Transverse colon (tissue), 4 donors: ENCODE measurements at regions of chrX and their contacts with region 1.

Region 1: GRCh38 chrX:51860679-51861078 is 32.7 kb upstream of the MAGED1 start:
- DNase-seq: peak; percentile 14
- H3K4me3 ChIP-seq: no peak overlapping the region
- H3K27ac ChIP-seq: no peak overlapping the region
- H3K4me1 ChIP-seq: no peaks in the 10 kb centered on the region
- H3K27me3 ChIP-seq: no peaks in the 10 kb centered on the region
- CTCF ChIP-seq: peak; percentile 18 to 39 (median 34)
- EP300 ChIP-seq: no peak
- POLR2A ChIP-seq: no peak

Region 2: GRCh38 chrX:50920132-50920531 is 940.5 kb before region 1 on chrX:
- in situ Hi-C with region 1: no loop called
- intact Hi-C with region 1: no loop called
- DNase-seq: no peak
- H3K4me3 ChIP-seq: no peak overlapping the region
- H3K27ac ChIP-seq: no peak overlapping the region
- H3K4me1 ChIP-seq: no peaks in the 10 kb centered on the region
- H3K27me3 ChIP-seq: no peaks in the 10 kb centered on the region
- CTCF ChIP-seq: peak; percentile 23 to 42 (median 31)
- EP300 ChIP-seq: no peak
- POLR2A ChIP-seq: no peak

Region 3: DNA sequence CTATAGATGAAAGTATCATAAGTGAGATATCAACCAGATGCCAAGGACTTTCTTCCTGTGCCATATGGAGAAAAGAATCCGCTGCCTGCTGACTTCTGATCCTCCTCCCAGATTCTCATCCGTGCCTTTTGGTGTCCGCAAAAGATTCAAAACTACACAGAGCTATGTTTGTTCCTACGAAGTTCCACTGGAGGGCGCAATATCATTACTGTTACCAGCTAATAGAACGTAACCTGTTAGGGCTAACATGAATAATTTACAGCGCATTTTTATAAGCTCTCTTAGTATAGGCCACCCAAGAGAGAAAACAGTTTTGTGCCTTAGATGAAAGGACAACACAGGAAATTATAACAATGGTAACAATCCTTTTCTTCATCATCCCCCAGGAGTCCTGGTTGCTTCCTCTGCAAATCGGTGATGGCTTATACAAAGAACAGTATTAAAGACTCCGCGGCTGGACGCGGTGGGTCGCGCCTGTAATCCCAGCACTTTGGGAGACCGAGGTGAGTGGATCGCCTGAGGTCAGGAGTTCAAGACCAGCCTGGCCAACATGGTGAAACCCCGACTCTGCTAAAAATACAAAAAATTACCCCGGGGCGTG is 219.2 kb before region 1 on chrX:
- in situ Hi-C with region 1: loop called in 2 of 4 experiments (anchors 25 kb)
- intact Hi-C with region 1: no loop called
- DNase-seq: no peak
- H3K4me3 ChIP-seq: no peak overlapping the region
- H3K27ac ChIP-seq: no peak overlapping the region
- H3K4me1 ChIP-seq: no peaks in the 10 kb centered on the region
- H3K27me3 ChIP-seq: no peaks in the 10 kb centered on the region
- CTCF ChIP-seq: peak in 4 of 5 experiments; percentile 27 to 41 (median 34)
- EP300 ChIP-seq: no peak
- POLR2A ChIP-seq: no peak

Region 4: DNA sequence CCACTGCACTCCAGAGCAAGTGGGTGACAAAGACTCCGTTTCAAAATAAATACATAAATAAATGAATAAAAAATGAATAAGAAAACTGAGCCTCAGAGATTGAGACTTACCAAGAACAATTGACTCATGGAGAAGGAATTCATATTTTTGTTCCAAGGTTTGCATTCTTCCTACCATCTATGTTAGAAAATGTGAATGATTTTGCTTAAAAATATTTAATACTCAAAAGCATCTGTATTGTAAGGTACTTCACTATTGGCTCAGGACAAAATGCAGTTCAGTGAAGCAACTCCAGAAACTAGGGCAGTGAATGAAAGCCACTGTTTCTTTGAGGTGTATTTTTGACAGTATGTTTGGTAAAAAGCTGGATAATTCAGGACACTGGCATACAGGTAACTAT is 562.2 kb after region 1 on chrX:
- in situ Hi-C with region 1: no loop called
- intact Hi-C with region 1: no loop called
- DNase-seq: no peak
- H3K4me3 ChIP-seq: no peak overlapping the region
- H3K27ac ChIP-seq: no peak overlapping the region
- H3K4me1 ChIP-seq: no peaks in the 10 kb centered on the region
- H3K27me3 ChIP-seq: no peaks in the 10 kb centered on the region
- CTCF ChIP-seq: no peak
- EP300 ChIP-seq: no peak
- POLR2A ChIP-seq: no peak